ENCODE measurements at regions of chr4 and their contacts with region 1.

Region 1: DNA sequence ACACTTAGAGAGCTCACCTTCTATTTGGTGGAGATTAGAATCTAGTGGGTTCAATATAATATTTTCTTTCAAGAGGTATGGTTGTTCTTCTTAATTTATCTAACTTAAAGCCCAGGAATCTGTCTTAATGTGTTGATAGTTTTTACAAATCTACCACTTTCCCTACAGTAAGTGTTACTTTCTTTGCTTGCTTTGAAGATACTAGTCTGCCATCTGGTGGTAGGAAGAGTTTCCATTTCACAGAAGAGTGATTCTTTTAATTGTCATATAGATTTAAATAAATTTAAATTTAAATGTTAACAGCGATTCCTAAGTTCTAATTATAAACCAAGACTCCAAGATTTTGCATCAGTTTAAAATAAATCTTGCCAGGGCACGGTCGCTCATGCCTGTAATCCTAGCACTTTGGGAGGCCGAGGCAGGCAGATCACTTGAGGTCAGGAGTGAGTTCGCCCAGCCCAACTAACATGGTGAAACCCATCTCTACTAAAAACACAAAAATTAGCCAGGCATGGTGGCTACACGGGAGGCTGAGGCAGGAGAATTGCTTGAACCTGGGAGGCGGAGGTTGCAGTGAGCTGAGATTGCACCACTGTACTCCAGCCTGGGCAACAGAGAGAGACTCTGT is 43.5 kb downstream of the NUDT9 start:
- DNase-seq: peak; percentile 50
- H3K4me3 Mint-ChIP-seq: no peak overlapping the region
- H3K27ac Mint-ChIP-seq: no peak overlapping the region
- H3K4me1 Mint-ChIP-seq: no peaks in the 10 kb centered on the region
- H3K27me3 Mint-ChIP-seq: no peaks in the 10 kb centered on the region
- CTCF ChIP-seq: peak; percentile 47

Region 2: DNA sequence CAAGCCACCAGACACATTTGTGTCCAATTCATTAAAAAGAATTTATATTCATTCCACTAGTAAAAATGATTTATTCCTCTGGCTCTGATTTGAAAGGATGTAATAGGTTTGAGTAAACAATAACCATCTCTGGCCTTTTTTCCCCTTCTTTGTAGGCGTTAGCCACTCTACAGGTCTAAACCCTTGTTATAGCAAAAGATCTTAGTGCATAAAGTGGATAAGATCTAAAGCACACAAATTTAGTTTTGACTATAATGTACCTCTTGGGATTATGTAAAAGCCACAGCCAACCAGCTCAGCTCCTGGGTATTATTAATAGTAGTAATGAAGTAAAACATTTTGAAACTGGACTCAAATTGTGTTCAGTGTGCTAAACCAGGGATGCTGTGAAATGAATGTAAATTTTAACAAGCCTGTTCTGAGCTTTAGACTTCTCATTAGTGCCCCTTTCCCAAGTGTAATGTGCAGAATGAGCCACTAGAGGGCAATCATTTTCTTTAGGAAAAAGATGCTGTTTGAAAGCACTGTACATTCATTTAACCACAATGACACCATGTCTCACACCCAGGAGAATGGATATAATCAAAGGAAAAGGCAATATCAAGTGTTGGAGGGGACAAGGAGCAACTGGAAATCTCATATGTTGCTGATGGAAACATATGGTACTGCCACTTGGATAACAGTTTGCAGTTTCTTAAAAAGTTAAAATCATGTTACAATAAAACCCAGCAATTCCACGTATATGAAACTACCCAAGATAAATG is 315.2 kb before region 1 on chr4:
- CTCF ChIA-PET with region 1: interaction called, 5 read pairs
- POLR2A ChIA-PET with region 1: no interaction called
- intact Hi-C with region 1: loop called (anchors 2 kb)
- DNase-seq: peak; percentile 85
- H3K4me3 Mint-ChIP-seq: no peak overlapping the region
- H3K27ac Mint-ChIP-seq: no peak overlapping the region
- H3K4me1 Mint-ChIP-seq: peaks cover 11% of the 10 kb centered on the region
- H3K27me3 Mint-ChIP-seq: no peaks in the 10 kb centered on the region
- CTCF ChIP-seq: peak; percentile 81

Region 3: DNA sequence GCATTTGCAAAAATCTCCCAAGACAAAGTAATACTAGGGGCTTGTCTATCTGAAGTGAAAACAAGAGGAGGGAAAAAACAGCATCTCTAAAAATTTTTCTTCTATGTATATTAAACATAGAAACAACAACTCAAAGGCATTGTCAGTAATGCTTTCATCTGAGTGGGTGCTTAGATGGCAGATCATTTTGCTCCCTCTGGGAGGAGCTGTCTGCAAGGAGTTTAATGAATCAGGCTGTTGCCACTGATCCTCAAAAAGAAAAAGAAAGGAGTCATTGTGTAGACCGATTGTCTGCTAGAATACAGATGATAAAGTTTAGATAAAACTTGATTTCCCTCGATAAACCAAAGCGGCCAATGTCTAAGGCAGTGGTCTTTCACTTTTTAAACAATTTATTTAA is 195.7 kb before region 1 on chr4:
- CTCF ChIA-PET with region 1: interaction called, 9 read pairs
- POLR2A ChIA-PET with region 1: interaction called, 3 read pairs
- intact Hi-C with region 1: loop called (anchors 1 kb)
- DNase-seq: peak; percentile 63
- H3K4me3 Mint-ChIP-seq: no peak overlapping the region
- H3K27ac Mint-ChIP-seq: no peak overlapping the region
- H3K4me1 Mint-ChIP-seq: no peaks in the 10 kb centered on the region
- H3K27me3 Mint-ChIP-seq: no peaks in the 10 kb centered on the region
- CTCF ChIP-seq: peak; percentile 59

Region 4: DNA sequence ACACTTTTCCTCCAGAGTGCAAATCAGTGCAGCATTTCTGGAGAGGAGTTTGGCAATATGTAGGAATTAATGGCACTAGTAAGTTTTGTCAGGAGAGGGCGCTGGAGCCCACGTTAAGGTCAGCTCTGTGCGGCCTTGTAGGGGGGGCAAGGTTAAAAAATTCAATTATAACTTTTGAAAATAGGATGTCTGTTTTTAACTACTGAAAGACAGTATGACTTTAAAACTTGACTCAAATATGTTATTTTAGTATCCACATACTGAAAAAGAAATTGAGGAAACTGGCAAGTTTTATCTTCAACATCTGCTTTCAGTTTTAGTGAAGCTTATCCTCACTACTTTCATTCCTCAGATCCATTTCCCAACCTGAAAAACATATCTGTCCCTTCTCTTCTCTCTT is 112.3 kb before region 1 on chr4:
- CTCF ChIA-PET with region 1: interaction called, 11 read pairs
- POLR2A ChIA-PET with region 1: interaction called, 4 read pairs
- intact Hi-C with region 1: loop called (anchors 5 kb)
- DNase-seq: peak; percentile 71
- H3K4me3 Mint-ChIP-seq: no peak overlapping the region
- H3K27ac Mint-ChIP-seq: peak overlapping the region; percentile 79
- H3K4me1 Mint-ChIP-seq: peaks cover 18% of the 10 kb centered on the region
- H3K27me3 Mint-ChIP-seq: no peaks in the 10 kb centered on the region
- CTCF ChIP-seq: peak; percentile 77

Region 5: DNA sequence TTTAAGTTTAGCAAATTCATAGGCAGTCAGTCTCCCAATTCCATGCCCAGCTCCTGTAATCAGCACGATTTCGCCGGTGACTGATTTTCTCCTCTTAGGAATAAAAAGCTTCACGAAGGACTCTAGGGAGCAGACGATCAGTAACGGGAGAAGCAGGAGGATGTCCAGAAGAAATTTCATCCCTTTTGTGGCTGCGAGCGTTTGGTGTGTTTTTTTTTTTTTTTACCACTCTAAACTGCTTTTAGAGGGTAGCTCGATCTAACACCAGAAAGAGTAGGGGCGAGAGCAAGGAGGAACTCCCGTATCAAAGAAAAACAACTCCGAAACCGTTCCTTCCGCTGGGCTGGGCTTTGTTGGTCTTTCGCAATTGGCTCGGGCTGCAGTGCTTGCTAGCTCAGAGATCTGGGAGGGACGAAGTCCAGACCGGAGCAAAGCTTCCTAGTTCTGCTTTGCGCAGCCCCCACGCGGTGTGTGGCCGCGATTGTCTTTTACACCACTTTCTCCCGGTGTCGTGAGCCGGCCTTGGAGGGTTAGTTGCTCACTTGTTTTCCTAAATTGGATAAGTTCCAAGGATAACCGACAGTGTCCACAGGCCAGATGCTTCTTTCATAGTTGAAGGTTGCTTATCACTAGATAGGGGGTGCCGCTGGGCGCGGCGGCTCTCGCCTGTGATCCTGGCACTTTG is 74.8 kb before region 1 on chr4 and contains the start of gene HSD17B11:
- CTCF ChIA-PET with region 1: interaction called, 6 read pairs
- POLR2A ChIA-PET with region 1: no interaction called
- intact Hi-C with region 1: loop called (anchors 5 kb)
- DNase-seq: peak; percentile 92
- H3K4me3 Mint-ChIP-seq: peak within 1 kb of the TSS; percentile 93
- H3K27ac Mint-ChIP-seq: peak within 1 kb of the TSS; percentile 88
- H3K4me1 Mint-ChIP-seq: peaks cover 20% of the 10 kb centered on the region
- H3K27me3 Mint-ChIP-seq: no peaks in the 10 kb centered on the region
- CTCF ChIP-seq: no peak
- total RNA-seq, gene HSD17B11: 4.3 and 4.8 TPM in 2 replicates

Region 6: DNA sequence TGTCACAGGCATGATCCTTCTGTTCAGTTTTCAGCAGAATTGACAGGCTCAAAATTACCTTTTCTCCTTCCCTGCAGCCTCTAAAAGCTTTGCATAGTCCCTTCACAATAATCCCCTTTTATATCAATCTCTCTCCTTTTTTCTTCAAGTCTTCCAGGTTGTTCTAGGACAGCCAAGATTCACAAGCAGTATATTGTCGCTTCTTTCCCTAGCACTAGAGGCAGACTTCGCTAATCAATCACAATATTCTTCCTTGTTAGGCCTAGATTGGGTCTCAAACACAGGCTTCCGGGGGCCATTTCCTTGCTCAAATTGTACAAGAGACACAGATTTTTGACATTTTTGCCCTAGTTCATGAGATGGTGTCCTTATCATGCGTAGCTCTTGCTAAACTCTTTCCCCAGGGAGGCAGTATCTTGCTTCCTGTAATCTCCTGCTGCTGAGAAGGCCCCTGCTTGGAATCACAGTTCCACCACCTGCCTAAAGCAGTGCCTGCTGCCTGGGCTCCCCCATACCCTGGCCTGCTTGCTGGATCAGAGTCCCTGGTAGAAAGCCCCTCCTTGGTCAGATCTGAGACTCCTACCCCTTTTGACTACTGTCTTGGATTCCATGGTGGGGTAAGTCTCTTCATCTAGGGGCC is 241.5 kb after region 1 on chr4:
- CTCF ChIA-PET with region 1: no interaction called
- POLR2A ChIA-PET with region 1: no interaction called
- intact Hi-C with region 1: no loop called
- DNase-seq: no peak
- H3K4me3 Mint-ChIP-seq: no peak overlapping the region
- H3K27ac Mint-ChIP-seq: no peak overlapping the region
- H3K4me1 Mint-ChIP-seq: no peaks in the 10 kb centered on the region
- H3K27me3 Mint-ChIP-seq: no peaks in the 10 kb centered on the region
- CTCF ChIP-seq: no peak

Measured in MCF 10A (cell line).